Endothelial cell of umbilical vein (primary cell): ENCODE measurements at regions of chr11 and their contacts with region 1.

Region 1: DNA sequence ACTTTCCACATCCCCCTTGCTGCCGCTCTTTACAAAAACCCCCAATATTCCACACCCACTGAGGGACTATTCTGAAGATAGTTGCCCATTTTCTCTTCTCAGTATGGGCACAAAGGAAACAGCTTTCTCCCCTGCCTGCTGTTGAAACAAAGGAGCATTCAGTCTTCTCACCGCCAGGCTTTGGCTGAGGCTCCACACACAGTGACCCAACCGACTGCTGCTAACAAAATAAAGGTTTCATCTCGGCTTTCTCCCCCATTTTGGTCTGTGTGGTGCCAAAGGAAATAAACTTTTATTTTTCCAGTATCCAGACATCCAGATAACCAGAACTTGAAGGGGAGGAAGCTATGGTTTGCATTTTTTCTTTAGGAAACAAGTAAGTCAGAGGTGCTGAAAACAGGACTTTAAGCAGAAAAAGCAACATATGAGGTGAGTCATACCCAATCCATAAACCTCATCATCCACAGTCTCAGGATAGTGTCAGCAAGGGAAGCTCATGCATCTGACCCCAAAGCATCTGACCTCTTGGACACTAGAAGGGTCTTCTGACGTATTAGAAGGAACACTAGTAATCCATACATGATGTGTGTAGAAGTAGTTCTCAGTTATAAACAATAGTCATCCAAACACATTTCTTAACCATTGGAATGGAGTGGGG is 6.4 kb downstream of the CLMP start:
- DNase-seq: peak; percentile 73
- H3K4me3 ChIP-seq: no peak overlapping the region
- H3K27ac ChIP-seq: no peak overlapping the region
- H3K4me1 ChIP-seq: peaks cover 11% of the 10 kb centered on the region
- H3K27me3 ChIP-seq: peaks cover 0 to 4% of the 10 kb centered on the region in 2 experiments
- CTCF ChIP-seq: peak in 1 of 2 donors; percentile 13
- POLR2A ChIP-seq: no peak

Region 2: DNA sequence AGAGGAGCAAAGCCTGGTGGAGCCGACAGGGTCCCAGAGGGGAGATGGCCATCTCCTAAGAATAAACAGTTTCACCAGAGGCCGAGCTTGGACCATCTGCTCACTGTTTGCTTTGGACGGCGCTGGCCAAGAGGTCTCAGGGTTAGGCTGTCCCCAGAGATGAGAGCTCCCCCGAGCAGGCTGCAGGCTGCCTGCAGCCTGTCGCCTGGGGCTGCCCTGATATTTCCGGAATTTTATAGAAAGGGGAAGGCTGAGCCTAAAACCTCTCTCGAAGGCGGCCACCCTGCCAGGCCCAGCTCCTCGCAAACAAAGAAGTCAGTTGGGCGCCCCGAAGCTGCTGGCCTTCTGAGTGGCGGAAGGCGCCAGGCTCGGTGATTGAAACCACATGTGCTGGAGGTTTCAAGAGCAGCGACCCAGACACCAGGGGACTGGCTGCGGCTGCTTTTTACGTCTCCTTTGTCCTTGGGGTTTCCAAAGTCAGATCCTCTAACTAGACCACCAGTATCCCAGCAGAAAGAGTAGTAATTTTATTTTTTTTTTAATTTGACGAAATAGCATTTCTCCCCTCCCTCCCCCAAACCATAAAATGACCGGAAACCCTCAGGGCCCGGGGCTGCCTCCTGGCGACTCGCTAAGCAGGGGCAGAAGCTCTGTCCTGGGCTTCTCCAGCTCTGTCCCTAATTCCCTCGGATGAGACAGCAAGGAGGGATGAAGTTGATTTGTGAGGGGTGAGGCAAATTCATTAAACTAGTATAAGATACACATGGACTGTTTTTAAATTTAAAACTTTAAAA is 51.0 kb before region 1 on chr11:
- CTCF ChIA-PET with region 1: no interaction called
- POLR2A ChIA-PET with region 1: no interaction called
- dilution Hi-C with region 1: no loop called
- intact Hi-C with region 1: loop called (anchors 5 kb)
- DNase-seq: peak; percentile 33
- H3K4me3 ChIP-seq: no peak overlapping the region
- H3K27ac ChIP-seq: peak overlapping the region; percentile 36
- H3K4me1 ChIP-seq: peaks cover 9% of the 10 kb centered on the region
- H3K27me3 ChIP-seq: no peaks in the 10 kb centered on the region
- CTCF ChIP-seq: no peak
- POLR2A ChIP-seq: no peak

Region 3: GRCh38 chr11:123152956-123153355 is 35.7 kb before region 1 on chr11:
- CTCF ChIA-PET with region 1: no interaction called
- POLR2A ChIA-PET with region 1: no interaction called
- dilution Hi-C with region 1: no loop called
- intact Hi-C with region 1: no loop called
- DNase-seq: no peak
- H3K4me3 ChIP-seq: no peak overlapping the region
- H3K27ac ChIP-seq: no peak overlapping the region
- H3K4me1 ChIP-seq: no peaks in the 10 kb centered on the region
- H3K27me3 ChIP-seq: no peaks in the 10 kb centered on the region
- CTCF ChIP-seq: no peak
- POLR2A ChIP-seq: no peak